ENCODE measurements at regions of chr14 and their contacts with region 1.

Region 1: GRCh38 chr14:55599200-55599879 is 19.3 kb downstream of the KTN1 start:
- DNase-seq: peak; percentile 37
- H3K4me3 ChIP-seq: no peak overlapping the region
- H3K27ac ChIP-seq: no peak overlapping the region
- H3K4me1 ChIP-seq: peaks cover 21% of the 10 kb centered on the region
- H3K27me3 ChIP-seq: no peaks in the 10 kb centered on the region
- CTCF ChIP-seq: no peak

Region 2: DNA sequence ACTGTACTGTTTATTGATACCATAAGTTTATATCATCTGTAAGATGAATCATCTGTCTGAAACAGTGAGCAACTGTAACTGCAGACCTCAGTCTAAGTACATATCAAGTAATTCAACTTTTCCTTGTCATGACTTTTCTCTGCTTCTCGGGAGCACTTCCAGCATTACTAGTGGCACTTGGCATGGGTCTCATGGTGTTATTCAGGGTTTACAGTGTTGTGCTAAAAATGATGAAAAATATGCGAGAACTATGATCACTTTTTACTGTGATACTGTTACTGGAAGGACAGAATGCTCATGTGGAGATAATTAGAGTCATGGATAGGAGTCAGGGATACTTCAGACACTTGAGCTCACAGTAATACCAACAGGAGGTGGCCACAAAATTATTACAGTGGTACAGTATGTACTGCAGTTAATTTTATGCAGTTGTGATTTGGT is 11.1 kb before region 1 on chr14:
- CTCF ChIA-PET with region 1: no interaction called
- POLR2A ChIA-PET with region 1: no interaction called
- intact Hi-C with region 1: loop called (anchors 1 kb)
- DNase-seq: no peak
- H3K4me3 ChIP-seq: no peak overlapping the region
- H3K27ac ChIP-seq: no peak overlapping the region
- H3K4me1 ChIP-seq: peaks cover 70% of the 10 kb centered on the region
- H3K27me3 ChIP-seq: no peaks in the 10 kb centered on the region
- CTCF ChIP-seq: no peak

Region 3: GRCh38 chr14:56855891-56856461 is 1256.6 kb after region 1 on chr14:
- CTCF ChIA-PET with region 1: no interaction called
- POLR2A ChIA-PET with region 1: no interaction called
- intact Hi-C with region 1: no loop called
- DNase-seq: no peak
- H3K4me3 ChIP-seq: no peak overlapping the region
- H3K27ac ChIP-seq: no peak overlapping the region
- H3K4me1 ChIP-seq: no peaks in the 10 kb centered on the region
- H3K27me3 ChIP-seq: no peaks in the 10 kb centered on the region
- CTCF ChIP-seq: no peak